Aorta (tissue), 5 donors: ENCODE measurements at regions of chr12 and their contacts with region 1.

Region 1: DNA sequence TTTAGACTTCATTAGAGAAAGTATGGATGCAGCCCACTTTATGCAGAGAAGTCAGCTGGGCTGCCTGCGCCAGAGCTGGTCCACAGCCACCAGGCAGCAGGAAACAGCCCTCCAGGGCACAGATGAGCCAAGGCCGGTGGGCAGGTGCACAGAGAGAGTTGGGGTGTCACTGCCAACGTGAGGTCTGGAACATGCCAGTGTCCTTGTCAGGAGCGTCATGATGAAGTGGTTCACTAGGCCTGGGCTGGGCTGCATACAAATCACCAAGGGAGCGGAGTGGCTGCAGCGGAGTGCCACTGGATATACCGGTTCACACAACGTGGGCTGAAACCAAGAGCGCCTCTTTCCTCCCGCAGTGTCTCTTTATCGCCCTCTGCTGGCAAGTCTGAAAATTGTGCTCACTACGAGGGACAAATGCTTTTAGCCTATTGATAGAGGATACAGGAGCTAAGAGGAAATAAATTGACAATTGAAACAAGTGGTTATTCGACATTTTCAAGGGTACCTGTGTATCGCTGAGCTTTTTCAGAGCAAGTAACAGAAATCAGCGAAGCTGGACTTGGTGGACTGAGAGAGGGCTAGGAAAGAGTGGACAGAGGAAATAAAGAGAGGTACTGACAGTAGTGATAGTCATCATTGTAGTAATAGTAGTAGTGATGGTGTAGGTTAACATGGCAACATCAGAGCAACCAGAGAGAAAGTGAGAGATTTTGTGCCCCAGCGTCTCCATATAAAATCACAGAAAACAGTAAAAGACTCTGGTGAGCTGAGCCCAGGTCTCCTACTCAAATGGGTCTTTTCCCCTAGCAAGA is 52.0 kb upstream of the ITPR2 start:
- DNase-seq: peak; percentile 83 to 85
- ATAC-seq: peak; percentile 92
- H3K4me3 ChIP-seq: no peak overlapping the region
- H3K27ac ChIP-seq: no peak overlapping the region
- H3K4me1 ChIP-seq: no peaks in the 10 kb centered on the region
- H3K27me3 ChIP-seq: no peaks in the 10 kb centered on the region

Region 2: DNA sequence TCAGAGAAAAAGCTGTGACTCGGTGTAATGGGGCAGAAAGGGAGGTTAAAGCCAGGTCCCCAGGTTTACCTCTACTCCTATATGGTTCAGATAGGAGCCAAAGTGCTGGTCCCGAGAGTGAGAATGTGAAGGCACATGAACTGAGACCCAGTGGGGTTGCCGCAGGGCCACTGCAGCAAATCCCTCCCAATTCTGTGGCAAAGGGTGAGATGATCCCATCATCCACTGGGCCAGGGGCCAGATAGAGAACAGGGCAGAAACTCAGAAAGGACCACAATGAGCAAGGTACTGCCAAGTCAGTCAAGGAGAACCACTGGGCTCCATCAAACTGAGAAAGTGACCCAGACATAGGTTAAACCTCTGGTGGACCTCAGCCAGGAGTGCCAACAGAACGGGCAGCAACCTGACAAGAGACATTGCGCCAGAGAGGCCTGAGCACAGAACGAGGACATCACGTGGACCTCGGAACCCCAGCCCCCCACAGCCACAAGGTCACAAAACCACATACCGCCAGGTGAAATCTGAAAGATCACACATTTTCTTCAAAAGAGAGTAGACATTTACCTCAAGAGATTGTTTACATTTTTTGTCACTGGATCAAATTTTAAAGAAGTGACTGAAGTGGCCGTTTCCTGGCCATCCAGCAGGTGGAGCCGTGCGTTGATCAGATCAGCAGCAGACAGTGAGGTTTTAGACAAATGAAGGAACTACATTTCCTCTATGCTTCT is 31.5 kb before region 1 on chr12:
- intact Hi-C with region 1: loop called (anchors 2 kb)
- DNase-seq: peak; percentile 78 to 87
- ATAC-seq: peak; percentile 86
- H3K4me3 ChIP-seq: no peak overlapping the region
- H3K27ac ChIP-seq: no peak overlapping the region
- H3K4me1 ChIP-seq: no peaks in the 10 kb centered on the region
- H3K27me3 ChIP-seq: no peaks in the 10 kb centered on the region

Region 3: DNA sequence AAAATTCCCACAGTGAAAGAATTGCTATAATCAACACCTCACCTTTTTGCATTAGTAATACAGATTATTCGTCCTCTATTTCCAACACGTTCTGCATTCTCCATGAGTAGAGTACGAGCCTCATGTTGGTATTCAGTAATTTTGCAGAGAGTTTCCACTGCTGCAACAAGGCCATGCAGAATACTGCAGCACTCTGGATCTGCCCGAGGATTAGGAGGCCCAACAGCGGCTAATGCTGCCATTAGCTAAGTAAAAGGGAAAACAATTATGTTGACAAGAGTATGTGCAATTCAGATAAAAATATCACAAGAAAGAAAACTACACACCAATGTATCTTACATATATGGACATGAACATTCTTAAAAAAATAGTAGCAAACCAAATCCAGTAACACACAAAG is 43.7 kb after region 1 on chr12:
- intact Hi-C with region 1: no loop called
- DNase-seq: no peak
- ATAC-seq: no peak
- H3K4me3 ChIP-seq: no peak overlapping the region
- H3K27ac ChIP-seq: no peak overlapping the region
- H3K4me1 ChIP-seq: no peaks in the 10 kb centered on the region
- H3K27me3 ChIP-seq: no peaks in the 10 kb centered on the region